ENCODE measurements at regions of chr6 and their contacts with region 1.

Region 1: DNA sequence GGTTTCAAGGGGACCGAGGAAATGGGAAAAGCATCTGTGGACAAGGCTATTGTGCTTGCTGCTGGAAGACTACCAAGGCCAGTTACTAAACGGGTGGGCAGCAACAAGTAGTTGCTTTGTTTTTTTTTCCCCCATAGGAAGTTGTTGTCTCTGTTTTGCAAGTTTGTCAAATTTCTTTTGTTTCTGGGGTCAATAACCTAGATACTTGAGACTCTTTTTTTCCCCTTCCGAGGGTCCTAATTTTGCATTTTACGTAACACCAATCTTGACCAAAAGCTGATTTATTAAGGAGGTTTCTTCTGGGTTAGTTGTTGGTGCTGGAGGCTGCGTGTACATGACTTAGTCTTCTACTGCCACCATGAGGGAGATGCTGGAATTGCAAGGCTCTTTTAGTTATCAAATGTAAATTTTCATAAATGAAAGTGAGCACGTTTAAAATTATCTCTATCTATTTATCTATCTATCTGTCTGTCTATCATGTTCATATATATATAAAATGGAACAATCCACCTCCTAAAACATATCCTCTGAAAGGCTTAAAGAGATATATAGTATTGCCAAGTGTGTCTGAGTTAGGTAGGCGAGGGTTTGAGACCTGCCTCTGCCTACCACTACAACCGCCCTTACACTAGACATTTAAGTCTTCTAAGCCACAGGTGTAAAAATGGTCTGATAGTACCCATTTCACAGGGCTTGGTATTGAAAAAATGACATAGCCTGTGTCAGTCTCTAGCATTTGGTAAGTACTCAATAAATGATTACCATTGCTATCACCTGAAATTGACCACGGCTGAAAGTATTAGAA is 60.2 kb downstream of the GCLC start:
- DNase-seq: peak in 1 of 2 donors; percentile 82
- ATAC-seq: peak; percentile 58 to 93 (median 84)
- H3K4me3 ChIP-seq: peak overlapping the region in 6 of 10 donors; percentile 4 to 31 (median 14)
- H3K27ac ChIP-seq: peak overlapping the region; percentile 6 to 88 (median 71)
- H3K4me1 ChIP-seq: peaks cover 2 to 38% (median 22%) of the 10 kb centered on the region in 9 donors
- H3K27me3 ChIP-seq: peaks cover 0 to 18% (median 0%) of the 10 kb centered on the region in 7 donors
- CTCF ChIP-seq: peak; percentile 84 to 99 (median 97)

Region 2: DNA sequence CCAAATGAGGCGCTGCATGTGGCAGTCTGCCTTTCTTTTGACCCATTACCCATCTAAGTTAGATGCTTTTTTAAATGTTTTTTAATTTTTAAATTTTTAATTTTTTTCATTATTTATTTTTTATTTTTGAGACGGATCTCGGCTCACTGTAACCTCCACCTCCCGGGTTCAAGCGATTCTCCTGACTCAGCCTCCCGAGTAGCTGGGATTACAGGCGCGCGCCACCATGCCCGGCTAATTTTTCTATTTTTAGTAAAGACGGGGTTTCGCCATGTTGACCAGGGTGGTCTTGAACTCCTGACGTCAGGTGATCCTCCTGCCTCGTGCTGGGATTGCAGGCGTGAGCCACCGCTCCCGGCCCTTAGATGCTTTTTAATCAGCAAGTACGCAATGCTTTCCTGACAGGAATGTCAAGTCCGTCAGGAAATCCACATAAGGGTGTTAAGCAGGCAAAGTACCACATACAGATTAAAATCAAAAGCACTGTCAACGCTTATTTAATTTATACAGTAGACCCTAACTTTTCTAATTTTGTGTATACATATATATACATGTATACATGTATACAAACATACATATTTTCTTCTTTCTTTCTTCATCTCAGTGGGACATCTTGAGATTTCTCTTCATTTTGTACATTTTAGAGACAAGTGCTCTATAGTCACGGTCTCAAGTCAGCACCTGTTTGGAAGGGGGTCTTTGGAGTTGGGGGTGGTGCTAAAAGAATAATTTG is 488.6 kb before region 1 on chr6:
- intact Hi-C with region 1: loop called in 1 of 10 experiments (anchors 10 kb)
- DNase-seq: peak; percentile 15 to 21
- ATAC-seq: no peak
- H3K4me3 ChIP-seq: peak overlapping the region in 8 of 10 donors; percentile 16 to 81 (median 55)
- H3K27ac ChIP-seq: peak overlapping the region in 9 of 10 donors; percentile 66 to 94 (median 88)
- H3K4me1 ChIP-seq: peaks cover 0 to 31% (median 19%) of the 10 kb centered on the region in 9 donors
- H3K27me3 ChIP-seq: no peaks in the 10 kb centered on the region
- CTCF ChIP-seq: no peak

Region 3: GRCh38 chr6:53348371-53349208 is 136.1 kb before region 1 on chr6 and contains the start of gene ELOVL5:
- intact Hi-C with region 1: loop called in 4 of 10 experiments (anchors 5 to 10 kb)
- DNase-seq: peak; percentile 97 to 99
- ATAC-seq: peak; percentile 93 to 97 (median 94)
- H3K4me3 ChIP-seq: peak within 1 kb of the TSS; percentile 82 to 98 (median 93)
- H3K27ac ChIP-seq: peak within 1 kb of the TSS; percentile 90 to 100 (median 99)
- H3K4me1 ChIP-seq: peaks cover 0 to 40% (median 25%) of the 10 kb centered on the region in 9 donors
- H3K27me3 ChIP-seq: no peaks in the 10 kb centered on the region
- CTCF ChIP-seq: peak in 1 of 9 donors; percentile 14
- total RNA-seq, gene ELOVL5: 16.9 to 48.1 (median 29.7) TPM

Region 4: DNA sequence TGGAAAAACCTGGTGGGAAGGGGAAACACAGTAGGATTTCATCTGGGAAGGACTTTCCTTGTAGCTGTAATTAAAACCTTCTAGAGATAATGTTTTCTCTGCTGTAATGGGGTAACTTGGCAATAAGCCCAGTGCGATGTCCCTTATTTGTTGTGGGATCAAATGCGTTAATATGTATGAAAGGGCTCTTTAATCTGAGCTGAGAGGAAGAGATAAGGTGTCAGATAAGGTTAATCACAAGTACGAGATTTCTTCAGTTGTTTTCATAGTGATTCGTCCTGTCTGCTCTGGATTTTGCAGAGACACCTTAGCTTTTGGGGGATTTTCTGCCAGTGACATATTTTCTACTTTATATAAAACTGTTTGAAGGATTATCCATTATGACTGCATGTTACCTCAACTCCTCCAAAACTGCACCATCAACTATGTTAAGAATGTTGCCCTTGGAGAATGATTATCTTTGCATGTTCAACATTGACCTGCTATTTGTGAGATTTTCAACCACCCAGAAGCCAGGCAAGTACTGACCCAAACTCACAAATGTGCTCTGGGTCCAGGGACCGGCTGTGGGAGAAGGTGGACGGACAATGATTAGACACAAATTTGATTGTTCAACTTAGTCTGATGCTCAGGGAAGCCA is 114.7 kb before region 1 on chr6:
- intact Hi-C with region 1: loop called in 1 of 10 experiments (anchors 5 kb)
- DNase-seq: no peak
- ATAC-seq: no peak
- H3K4me3 ChIP-seq: no peak overlapping the region
- H3K27ac ChIP-seq: no peak overlapping the region
- H3K4me1 ChIP-seq: no peaks in the 10 kb centered on the region
- H3K27me3 ChIP-seq: no peaks in the 10 kb centered on the region
- CTCF ChIP-seq: no peak

Region 5: GRCh38 chr6:53437557-53438202 is 47.0 kb before region 1 on chr6:
- intact Hi-C with region 1: loop called in 4 of 10 experiments (anchors 2 to 10 kb)
- DNase-seq: peak in 1 of 2 donors; percentile 8
- ATAC-seq: peak in 6 of 8 donors; percentile 44 to 74 (median 62)
- H3K4me3 ChIP-seq: no peak overlapping the region
- H3K27ac ChIP-seq: no peak overlapping the region
- H3K4me1 ChIP-seq: peaks cover 0 to 43% (median 21%) of the 10 kb centered on the region in 9 donors
- H3K27me3 ChIP-seq: no peaks in the 10 kb centered on the region
- CTCF ChIP-seq: peak in 8 of 9 donors; percentile 39 to 65 (median 59)